A673 (cell line): ENCODE measurements at regions of chr14 and their contacts with region 1.

Region 1: GRCh38 chr14:31745741-31746140 is 184.5 kb downstream of the NUBPL start:
- DNase-seq: peak; percentile 4
- H3K4me3 ChIP-seq: no peak overlapping the region
- H3K27ac ChIP-seq: no peak overlapping the region
- H3K4me1 ChIP-seq: no peaks in the 10 kb centered on the region
- H3K27me3 ChIP-seq: no peaks in the 10 kb centered on the region
- CTCF ChIP-seq: peak; percentile 24; the same call in 1 of the 2 replicates

Region 2: GRCh38 chr14:31297701-31298344 is 447.9 kb before region 1 on chr14:
- CTCF ChIA-PET with region 1: no interaction called
- POLR2A ChIA-PET with region 1: no interaction called
- intact Hi-C with region 1: no loop called
- DNase-seq: no peak
- H3K4me3 ChIP-seq: no peak overlapping the region
- H3K27ac ChIP-seq: no peak overlapping the region
- H3K4me1 ChIP-seq: no peaks in the 10 kb centered on the region
- H3K27me3 ChIP-seq: no peaks in the 10 kb centered on the region
- CTCF ChIP-seq: no peak

Region 3: DNA sequence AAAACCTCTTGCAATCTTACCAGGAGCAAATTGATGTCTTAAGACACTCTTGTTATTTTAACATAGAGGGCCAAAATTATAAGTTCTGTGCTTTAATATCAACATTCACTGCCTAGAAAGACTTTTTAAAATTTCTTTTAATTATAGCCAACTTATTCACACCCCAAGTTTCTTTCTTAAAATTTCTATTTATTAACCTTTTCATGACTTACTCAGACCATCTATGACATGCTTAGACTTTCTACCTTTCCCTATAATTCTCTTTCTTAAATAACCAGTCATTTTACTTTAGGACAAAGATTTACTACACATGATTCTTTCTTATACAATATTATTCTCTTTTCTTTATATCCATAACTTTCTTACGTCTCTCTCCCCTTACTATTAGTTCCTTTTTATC is 35.8 kb after region 1 on chr14:
- CTCF ChIA-PET with region 1: no interaction called
- POLR2A ChIA-PET with region 1: no interaction called
- intact Hi-C with region 1: no loop called
- DNase-seq: peak; percentile 6
- H3K4me3 ChIP-seq: no peak overlapping the region
- H3K27ac ChIP-seq: no peak overlapping the region
- H3K4me1 ChIP-seq: no peaks in the 10 kb centered on the region
- H3K27me3 ChIP-seq: no peaks in the 10 kb centered on the region
- CTCF ChIP-seq: no peak

Region 4: DNA sequence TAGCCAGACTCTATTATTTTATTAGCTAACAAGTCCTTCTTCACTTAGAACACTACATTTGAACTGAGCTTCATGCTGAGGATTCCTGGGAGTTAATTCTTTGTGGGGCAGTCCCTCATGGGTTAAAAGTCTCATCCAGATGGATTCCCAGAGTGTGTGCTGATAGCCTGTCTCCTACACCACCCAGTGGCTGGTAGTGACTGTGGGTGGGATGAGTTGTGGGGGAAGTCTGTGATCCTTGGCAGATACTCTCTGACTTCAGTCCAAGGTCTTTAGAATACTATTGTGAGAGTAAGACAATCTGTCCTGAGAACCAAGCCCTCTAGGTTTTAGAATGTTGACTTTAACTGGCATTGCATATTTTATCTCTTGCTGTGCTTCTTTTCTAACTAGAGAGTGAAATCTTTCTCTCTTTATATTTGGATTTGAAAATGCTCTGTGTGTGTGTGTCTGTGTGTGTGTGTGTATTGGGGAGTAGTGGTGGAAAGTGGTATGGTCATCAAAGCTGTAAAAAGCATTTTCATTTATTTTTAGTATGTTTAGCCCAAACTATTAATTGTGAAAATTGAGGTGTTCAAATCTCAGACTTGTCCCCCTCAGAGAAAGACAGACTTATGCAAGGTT is 620.6 kb after region 1 on chr14:
- CTCF ChIA-PET with region 1: no interaction called
- POLR2A ChIA-PET with region 1: interaction called, 30 read pairs
- intact Hi-C with region 1: no loop called
- DNase-seq: peak; percentile 18
- H3K4me3 ChIP-seq: no peak overlapping the region
- H3K27ac ChIP-seq: no peak overlapping the region
- H3K4me1 ChIP-seq: no peaks in the 10 kb centered on the region
- H3K27me3 ChIP-seq: no peaks in the 10 kb centered on the region
- CTCF ChIP-seq: no peak